WTC11 (cell line): ENCODE measurements at regions of chr18 and their contacts with region 1.

Region 1: GRCh38 chr18:46173393-46174341 is 69.5 kb downstream of the HAUS1 start:
- DNase-seq: peak; percentile 97
- ATAC-seq: peak; percentile 85
- H3K4me3 Mint-ChIP-seq: peak overlapping the region; percentile 98
- H3K27ac Mint-ChIP-seq: peak overlapping the region; percentile 98
- H3K4me1 Mint-ChIP-seq: peaks cover 15% of the 10 kb centered on the region
- H3K27me3 Mint-ChIP-seq: no peaks in the 10 kb centered on the region
- CTCF ChIP-seq: peak; percentile 75

Region 2: GRCh38 chr18:46051731-46052461 is 121.8 kb before region 1 on chr18:
- CTCF ChIA-PET with region 1: no interaction called
- POLR2A ChIA-PET with region 1: no interaction called
- DNase-seq: no peak
- ATAC-seq: no peak
- H3K4me3 Mint-ChIP-seq: no peak overlapping the region
- H3K27ac Mint-ChIP-seq: no peak overlapping the region
- H3K4me1 Mint-ChIP-seq: no peaks in the 10 kb centered on the region
- H3K27me3 Mint-ChIP-seq: no peaks in the 10 kb centered on the region
- CTCF ChIP-seq: no peak

Region 3: DNA sequence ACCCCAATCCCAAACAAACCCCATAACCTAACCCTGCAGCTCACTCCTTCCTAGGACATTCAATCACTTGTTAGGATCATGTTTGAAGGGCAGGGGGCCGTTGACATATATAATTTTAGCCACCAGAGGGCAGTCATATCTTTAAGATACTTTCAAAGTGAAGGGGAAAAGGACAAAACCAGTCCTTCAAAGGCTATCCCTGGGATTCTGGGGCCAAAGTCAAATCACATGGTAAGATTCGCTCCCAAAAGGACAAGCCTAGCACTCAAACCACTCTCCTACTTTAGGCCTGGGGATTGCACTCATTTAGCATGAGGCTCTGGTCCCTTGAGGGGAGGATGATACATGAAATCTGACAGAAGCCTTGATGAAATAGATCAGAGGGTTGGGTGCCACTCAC is 24.9 kb before region 1 on chr18:
- CTCF ChIA-PET with region 1: interaction called, 61 read pairs
- POLR2A ChIA-PET with region 1: interaction called, 5 read pairs
- DNase-seq: peak; percentile 66
- ATAC-seq: peak; percentile 67
- H3K4me3 Mint-ChIP-seq: no peak overlapping the region
- H3K27ac Mint-ChIP-seq: 0 out of 2 replicates have a peak overlapping the region, but pooled peaks have one; percentile 20
- H3K4me1 Mint-ChIP-seq: peaks cover 29% of the 10 kb centered on the region
- H3K27me3 Mint-ChIP-seq: no peaks in the 10 kb centered on the region
- CTCF ChIP-seq: peak; percentile 68

Region 4: DNA sequence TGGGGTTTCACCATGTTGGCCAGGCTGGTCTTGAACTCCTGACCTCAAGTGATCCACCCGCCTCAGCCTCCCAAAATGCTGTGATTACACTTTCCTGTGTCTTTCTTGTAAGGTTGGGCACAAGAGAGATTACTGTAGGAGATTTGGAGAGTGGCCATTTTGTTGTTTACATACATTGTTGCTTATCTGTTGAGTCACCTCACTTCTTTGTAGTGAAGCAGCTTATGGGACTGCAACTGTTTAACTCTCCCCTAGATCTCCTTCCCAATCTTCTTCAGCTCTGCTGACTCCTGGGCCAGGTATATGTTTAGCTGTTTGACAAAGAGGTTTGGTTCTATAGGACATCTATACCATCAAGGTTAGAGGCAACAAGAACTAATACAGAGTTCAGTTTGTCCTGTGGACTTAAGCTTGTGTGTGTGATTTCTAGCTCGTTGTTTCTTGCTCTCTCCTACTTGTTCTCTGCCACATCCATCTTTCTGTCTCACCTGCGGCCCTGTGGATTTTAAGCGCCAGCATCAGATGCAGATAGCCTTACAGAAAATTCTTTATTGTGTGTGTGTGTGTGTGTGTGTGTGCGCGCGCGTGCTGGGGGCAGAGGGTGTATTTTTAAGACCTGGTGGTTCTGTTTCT is 26.0 kb after region 1 on chr18:
- CTCF ChIA-PET with region 1: interaction called, 17 read pairs
- POLR2A ChIA-PET with region 1: interaction called, 5 read pairs
- DNase-seq: no peak
- ATAC-seq: peak; percentile 47
- H3K4me3 Mint-ChIP-seq: no peak overlapping the region
- H3K27ac Mint-ChIP-seq: peak overlapping the region; percentile 93
- H3K4me1 Mint-ChIP-seq: peaks cover 15% of the 10 kb centered on the region
- H3K27me3 Mint-ChIP-seq: no peaks in the 10 kb centered on the region
- CTCF ChIP-seq: no peak

Region 5: GRCh38 chr18:46220116-46220515 is 46.4 kb after region 1 on chr18:
- CTCF ChIA-PET with region 1: interaction called, 15 read pairs
- POLR2A ChIA-PET with region 1: no interaction called
- DNase-seq: no peak
- ATAC-seq: no peak
- H3K4me3 Mint-ChIP-seq: no peak overlapping the region
- H3K27ac Mint-ChIP-seq: 0 out of 2 replicates have a peak overlapping the region, but pooled peaks have one; percentile 1
- H3K4me1 Mint-ChIP-seq: peaks cover 31% of the 10 kb centered on the region
- H3K27me3 Mint-ChIP-seq: no peaks in the 10 kb centered on the region
- CTCF ChIP-seq: no peak

Region 6: DNA sequence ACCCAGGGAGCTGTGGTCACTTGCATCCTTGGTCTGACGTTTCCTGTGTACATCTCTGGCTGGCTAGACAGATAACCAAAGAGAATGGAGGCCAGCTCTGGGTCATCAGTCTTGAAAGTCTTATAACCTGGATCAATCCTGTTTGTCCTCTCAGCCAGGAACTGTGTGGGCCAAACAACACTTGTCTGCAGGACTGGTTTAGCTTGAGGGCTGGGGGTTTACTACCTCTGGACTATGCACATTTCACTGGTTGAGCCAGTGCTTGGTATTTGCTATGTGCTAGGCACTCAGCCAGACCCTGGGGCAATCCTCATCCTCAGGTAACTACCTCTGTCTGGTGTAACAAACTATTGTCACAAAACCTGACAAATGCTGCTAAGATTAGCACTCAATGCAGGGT is 100.2 kb after region 1 on chr18:
- CTCF ChIA-PET with region 1: interaction called, 16 read pairs
- POLR2A ChIA-PET with region 1: no interaction called
- DNase-seq: no peak
- ATAC-seq: no peak
- H3K4me3 Mint-ChIP-seq: no peak overlapping the region
- H3K27ac Mint-ChIP-seq: no peak overlapping the region
- H3K4me1 Mint-ChIP-seq: peaks cover 25% of the 10 kb centered on the region
- H3K27me3 Mint-ChIP-seq: no peaks in the 10 kb centered on the region
- CTCF ChIP-seq: no peak